ENCODE measurements at regions of chr1 and their contacts with region 1.

Region 1: DNA sequence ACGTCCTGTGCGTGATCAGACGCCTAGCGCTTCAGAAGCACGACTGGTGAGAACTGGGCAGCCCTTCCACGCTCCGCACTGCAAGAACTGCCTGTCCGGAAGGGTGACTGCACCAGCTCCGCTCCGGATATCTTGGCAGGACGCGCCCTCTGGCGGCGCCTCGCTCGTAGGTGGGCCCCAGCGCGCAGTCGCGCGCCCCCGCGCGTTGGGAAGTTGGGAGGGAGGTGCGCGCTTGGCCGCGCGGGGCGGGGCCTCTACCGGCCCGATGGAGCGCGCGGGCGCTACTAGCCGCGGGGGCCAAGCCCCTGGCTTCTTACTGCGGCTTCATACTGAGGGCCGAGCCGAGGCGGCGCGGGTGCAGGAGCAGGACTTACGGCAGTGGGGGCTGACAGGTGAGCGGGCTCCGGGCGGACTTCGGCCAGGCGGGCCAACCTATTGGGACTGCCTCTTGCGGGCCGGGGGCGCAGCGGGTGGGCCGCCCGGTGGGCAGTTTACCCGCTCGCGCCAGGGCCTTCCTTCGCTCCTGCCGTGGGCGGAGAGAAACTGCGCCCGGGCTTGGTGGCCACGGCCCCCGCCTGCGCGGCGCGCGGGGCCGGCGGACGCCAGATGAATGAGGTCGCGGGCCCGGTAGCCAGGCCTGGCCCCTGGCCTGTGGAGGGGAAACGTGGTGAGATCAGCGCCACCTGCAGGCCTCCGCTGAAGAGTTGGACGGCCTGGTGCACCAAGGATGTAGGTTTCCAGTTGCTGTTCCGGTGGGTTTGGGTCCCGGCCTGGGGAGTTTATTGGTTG is at the start of gene CHD1L:
- DNase-seq: peak; percentile 99
- total RNA-seq, gene CHD1L: 36.4 to 38.9 TPM

Region 2: GRCh38 chr1:147084273-147085096 is 158.1 kb before region 1 on chr1:
- intact Hi-C with region 1: loop called in 1 of 2 experiments (anchors 5 kb)
- DNase-seq: peak; percentile 92

Region 3: DNA sequence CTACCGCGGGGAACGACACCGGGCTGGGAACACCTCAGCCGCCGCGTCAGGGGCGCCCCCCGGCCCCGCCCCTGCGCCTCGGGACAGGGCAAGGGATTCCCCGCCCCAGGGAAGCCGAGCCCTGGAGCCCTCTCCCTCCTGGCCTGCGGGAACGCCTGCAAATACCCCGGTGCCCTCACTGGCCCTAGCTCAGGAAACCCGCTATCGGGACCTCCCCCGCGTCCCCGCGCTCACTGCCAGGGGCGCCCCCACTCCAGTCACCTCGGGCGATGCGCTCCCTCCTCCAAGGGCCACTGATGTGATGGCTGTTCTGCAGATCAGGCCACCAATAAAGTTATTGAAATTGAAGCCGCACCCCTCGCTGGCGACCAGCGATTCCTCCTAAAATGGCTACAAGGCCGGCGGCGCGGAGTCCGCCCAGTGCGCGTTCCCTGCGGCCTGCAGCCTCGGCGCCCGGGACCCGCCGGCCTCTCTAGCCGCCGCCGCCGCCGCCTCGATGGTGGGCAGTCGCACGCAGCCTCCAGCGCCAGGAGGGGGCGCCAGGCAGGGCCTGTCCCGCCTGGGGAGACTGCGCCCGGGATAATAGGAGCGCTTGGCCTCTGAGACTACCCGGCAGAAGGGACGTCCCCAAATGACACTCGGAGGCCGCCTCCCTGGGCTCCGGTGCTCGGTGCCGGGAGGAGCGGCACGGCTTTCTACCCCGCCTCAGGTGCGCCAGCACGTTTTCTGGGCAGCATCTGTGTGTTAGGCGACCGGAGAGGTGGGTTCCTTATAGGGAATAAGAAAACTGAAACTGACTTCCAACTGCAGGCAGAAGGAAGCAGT is 70.3 kb before region 1 on chr1 and contains the start of gene PRKAB2:
- intact Hi-C with region 1: loop called (anchors 2 to 5 kb)
- DNase-seq: peak; percentile 99
- total RNA-seq, gene PRKAB2: 26.1 to 26.5 TPM

Region 4: DNA sequence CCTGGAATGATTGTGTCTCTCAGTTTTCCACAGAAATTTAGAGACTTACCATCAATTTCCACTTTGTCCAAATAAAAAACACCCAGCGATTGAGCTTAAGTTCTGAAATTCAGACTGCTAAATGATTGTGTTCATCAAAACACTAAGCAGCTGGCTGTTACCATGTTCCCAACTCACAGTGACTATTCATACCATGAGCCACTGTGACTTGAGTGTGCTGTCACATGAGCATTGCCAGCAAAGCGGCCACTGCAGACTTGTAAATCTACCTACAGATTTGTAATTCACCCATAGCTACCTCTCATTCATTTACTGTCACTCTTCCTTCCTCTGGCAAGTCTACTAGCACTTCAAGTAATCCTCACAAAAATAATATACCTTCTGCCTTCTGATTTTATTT is 53.1 kb before region 1 on chr1:
- intact Hi-C with region 1: no loop called
- DNase-seq: no peak